ENCODE measurements at regions of chr6 and their contacts with region 1.

Region 1: GRCh38 chr6:89080542-89081422 is at the start of gene PNRC1:
- DNase-seq: peak; percentile 95
- ATAC-seq: peak; percentile 80
- H3K4me3 ChIP-seq: peak within 1 kb of the TSS; percentile 90
- H3K27ac ChIP-seq: peak within 1 kb of the TSS; percentile 50
- H3K4me1 ChIP-seq: peaks cover 28% of the 10 kb centered on the region
- H3K27me3 ChIP-seq: no peaks in the 10 kb centered on the region
- CTCF ChIP-seq: no peak
- total RNA-seq, gene PNRC1: 9.3 and 12.7 TPM in 2 replicates

Region 2: GRCh38 chr6:89026151-89026550 is 54.6 kb before region 1 on chr6:
- CTCF ChIA-PET with region 1: no interaction called
- POLR2A ChIA-PET with region 1: interaction called, 21 read pairs
- intact Hi-C with region 1: loop called (anchors 1 kb)
- DNase-seq: no peak
- ATAC-seq: no peak
- H3K4me3 ChIP-seq: no peak overlapping the region
- H3K27ac ChIP-seq: no peak overlapping the region
- H3K4me1 ChIP-seq: peaks cover 6% of the 10 kb centered on the region; the same call in 1 of the 2 replicates
- H3K27me3 ChIP-seq: no peaks in the 10 kb centered on the region
- CTCF ChIP-seq: no peak

Region 3: GRCh38 chr6:89048985-89049384 is 31.8 kb before region 1 on chr6:
- CTCF ChIA-PET with region 1: no interaction called
- POLR2A ChIA-PET with region 1: no interaction called
- intact Hi-C with region 1: loop called (anchors 5 kb)
- DNase-seq: peak; percentile 53
- ATAC-seq: no peak
- H3K4me3 ChIP-seq: no peak overlapping the region
- H3K27ac ChIP-seq: no peak overlapping the region
- H3K4me1 ChIP-seq: peaks cover 25% of the 10 kb centered on the region
- H3K27me3 ChIP-seq: no peaks in the 10 kb centered on the region
- CTCF ChIP-seq: no peak

Region 4: GRCh38 chr6:89297695-89298351 is 217.0 kb after region 1 on chr6:
- CTCF ChIA-PET with region 1: interaction called, 12 read pairs
- POLR2A ChIA-PET with region 1: no interaction called
- intact Hi-C with region 1: no loop called
- DNase-seq: peak; percentile 94
- ATAC-seq: peak; percentile 89
- H3K4me3 ChIP-seq: peak overlapping the region; percentile 55; the same call in 1 of the 2 replicates
- H3K27ac ChIP-seq: peak overlapping the region; percentile 90
- H3K4me1 ChIP-seq: peaks cover 26% of the 10 kb centered on the region
- H3K27me3 ChIP-seq: no peaks in the 10 kb centered on the region
- CTCF ChIP-seq: no peak